ENCODE measurements at regions of chr2 and their contacts with region 1.

Region 1: DNA sequence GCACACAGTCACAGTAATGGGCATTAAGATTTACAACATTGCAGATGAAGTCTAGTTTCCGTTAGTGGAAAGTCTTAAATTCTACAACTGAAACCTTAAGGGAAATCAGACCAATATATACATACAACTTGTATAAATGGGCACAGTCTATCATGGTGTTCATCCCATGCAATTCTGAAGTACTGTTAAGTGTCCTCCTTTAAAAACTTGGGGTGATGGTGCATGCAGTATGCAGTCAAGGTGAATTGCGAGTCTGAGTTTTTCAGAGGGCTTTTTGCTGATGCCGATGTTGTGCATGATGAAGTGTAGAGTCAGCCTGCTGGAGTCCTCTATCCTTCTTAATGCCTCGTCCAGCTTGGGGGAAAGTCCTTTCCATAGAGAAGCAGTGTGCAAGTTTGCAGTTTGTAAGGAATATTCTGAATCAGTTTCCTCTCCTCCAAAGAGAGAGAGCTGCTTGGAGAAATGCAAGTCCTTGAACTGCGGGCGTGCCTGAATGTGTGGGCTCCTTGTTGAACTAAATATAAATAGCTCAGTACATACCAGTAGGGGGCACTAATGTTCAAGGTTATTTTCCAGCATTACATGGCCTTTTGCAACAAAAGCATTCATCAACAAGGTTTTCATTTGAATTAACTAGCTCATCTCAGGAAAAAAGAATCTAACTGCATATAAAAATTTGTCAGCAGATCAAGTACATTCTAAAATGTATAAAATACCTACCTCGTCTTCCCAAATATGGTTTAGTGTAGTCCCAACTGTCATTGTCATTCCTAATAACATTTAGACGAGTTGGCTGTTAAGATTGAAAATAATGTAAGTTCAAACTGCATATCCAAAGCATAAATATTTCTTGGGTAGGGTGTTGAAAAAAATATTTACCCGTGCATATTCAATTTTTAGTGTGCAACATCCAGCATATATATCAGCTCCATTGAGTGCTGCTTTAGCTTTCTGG is 21.3 kb downstream of the HNRNPLL start:
- DNase-seq: peak; percentile 52
- ATAC-seq: peak; percentile 84
- H3K4me3 ChIP-seq: no peak overlapping the region
- H3K27ac ChIP-seq: no peak overlapping the region
- H3K4me1 ChIP-seq: peaks cover 6% of the 10 kb centered on the region in 2 experiments; a peak in 3 of 4 replicates
- H3K27me3 ChIP-seq: no peaks in the 10 kb centered on the region
- CTCF ChIP-seq: peak; percentile 61 to 78 (median 65); a peak in 5 of 6 replicates
- POLR2A ChIP-seq: no peak
- RAD21 ChIP-seq: peak; percentile 78

Region 2: GRCh38 chr2:38315707-38316333 is 265.6 kb before region 1 on chr2:
- CTCF ChIA-PET with region 1: interaction called, 10 read pairs
- POLR2A ChIA-PET with region 1: no interaction called
- RAD21 ChIA-PET with region 1: no interaction called
- intact Hi-C with region 1: loop called (anchors 5 kb)
- DNase-seq: peak; percentile 31
- ATAC-seq: peak; percentile 85
- H3K4me3 ChIP-seq: no peak overlapping the region
- H3K27ac ChIP-seq: no peak overlapping the region
- H3K4me1 ChIP-seq: no peaks in the 10 kb centered on the region
- H3K27me3 ChIP-seq: no peaks in the 10 kb centered on the region
- CTCF ChIP-seq: peak; percentile 70 to 80 (median 77)
- POLR2A ChIP-seq: no peak
- RAD21 ChIP-seq: peak; percentile 88

Region 3: DNA sequence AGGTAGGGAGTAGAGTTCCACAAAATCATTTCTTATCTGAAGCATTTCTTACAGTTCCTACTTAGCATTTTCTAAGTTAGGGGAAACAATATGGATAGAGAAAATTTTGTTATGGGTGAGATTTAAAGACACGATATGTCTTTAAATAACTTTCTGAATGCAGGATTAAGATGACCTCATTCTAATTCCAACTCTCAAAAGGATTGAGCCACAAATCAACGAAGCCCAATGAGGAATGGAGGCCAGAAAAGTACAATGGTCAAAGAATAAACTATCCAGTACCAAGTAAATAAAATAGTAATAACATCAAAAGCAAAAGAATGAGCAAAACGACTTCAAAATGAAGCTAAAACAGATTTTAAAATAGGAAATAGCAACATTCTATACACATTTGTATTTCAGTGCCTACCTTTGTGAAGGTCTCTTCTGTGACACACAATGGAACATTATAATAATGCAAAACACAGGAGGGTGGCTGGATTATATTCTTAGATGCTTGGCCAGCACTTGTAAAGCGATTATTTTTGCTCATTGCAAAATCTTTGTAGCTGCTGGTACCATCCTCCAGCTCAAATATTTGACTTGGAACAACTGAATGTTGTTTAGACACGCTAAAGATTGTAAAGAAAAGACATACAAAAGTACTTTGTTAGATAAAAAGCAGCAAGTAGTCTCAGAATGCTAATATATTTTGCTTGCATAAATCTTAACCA is 12.6 kb before region 1 on chr2:
- CTCF ChIA-PET with region 1: interaction called, 20 read pairs
- POLR2A ChIA-PET with region 1: no interaction called
- RAD21 ChIA-PET with region 1: no interaction called
- intact Hi-C with region 1: no loop called
- DNase-seq: no peak
- ATAC-seq: no peak
- H3K4me3 ChIP-seq: no peak overlapping the region
- H3K27ac ChIP-seq: no peak overlapping the region
- H3K4me1 ChIP-seq: no peaks in the 10 kb centered on the region
- H3K27me3 ChIP-seq: no peaks in the 10 kb centered on the region
- CTCF ChIP-seq: no peak
- POLR2A ChIP-seq: no peak
- RAD21 ChIP-seq: no peak

Region 4: DNA sequence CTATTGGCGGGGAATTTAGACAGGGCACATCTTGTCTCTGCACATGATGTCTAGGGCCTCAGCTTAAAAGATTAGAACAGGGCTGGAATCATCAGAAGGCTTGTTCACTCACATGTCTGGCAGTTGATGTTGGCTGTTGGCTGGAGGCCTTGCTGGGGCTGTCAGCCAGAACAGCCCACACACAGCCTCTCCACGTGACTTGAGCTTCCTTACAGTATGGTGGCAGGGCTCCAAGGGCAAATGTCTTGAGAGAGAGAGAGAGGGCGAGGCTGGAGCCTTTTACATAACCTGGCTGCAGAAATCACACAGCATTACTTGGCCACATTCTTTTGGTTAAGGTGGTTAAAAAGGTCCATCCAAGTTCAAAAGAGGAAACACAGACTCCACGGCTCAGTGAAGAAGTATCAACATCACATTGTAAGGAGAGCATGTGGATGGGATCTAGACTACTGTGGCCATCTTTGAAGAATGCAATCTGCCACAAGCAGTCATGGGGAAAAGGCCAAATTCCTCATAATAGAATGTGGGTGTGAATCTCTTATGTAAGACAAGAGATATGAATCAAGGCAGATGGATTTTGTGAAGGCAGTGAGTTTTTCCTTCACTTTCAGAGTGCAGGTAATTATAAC is 139.3 kb after region 1 on chr2:
- CTCF ChIA-PET with region 1: interaction called, 12 read pairs
- POLR2A ChIA-PET with region 1: no interaction called
- RAD21 ChIA-PET with region 1: no interaction called
- intact Hi-C with region 1: loop called (anchors 2 kb)
- DNase-seq: no peak
- ATAC-seq: peak; percentile 26
- H3K4me3 ChIP-seq: no peak overlapping the region
- H3K27ac ChIP-seq: no peak overlapping the region
- H3K4me1 ChIP-seq: peaks cover 18 to 23% of the 10 kb centered on the region in 2 experiments; a peak in 3 of 4 replicates
- H3K27me3 ChIP-seq: no peaks in the 10 kb centered on the region
- CTCF ChIP-seq: no peak
- POLR2A ChIP-seq: no peak
- RAD21 ChIP-seq: no peak

Region 5: DNA sequence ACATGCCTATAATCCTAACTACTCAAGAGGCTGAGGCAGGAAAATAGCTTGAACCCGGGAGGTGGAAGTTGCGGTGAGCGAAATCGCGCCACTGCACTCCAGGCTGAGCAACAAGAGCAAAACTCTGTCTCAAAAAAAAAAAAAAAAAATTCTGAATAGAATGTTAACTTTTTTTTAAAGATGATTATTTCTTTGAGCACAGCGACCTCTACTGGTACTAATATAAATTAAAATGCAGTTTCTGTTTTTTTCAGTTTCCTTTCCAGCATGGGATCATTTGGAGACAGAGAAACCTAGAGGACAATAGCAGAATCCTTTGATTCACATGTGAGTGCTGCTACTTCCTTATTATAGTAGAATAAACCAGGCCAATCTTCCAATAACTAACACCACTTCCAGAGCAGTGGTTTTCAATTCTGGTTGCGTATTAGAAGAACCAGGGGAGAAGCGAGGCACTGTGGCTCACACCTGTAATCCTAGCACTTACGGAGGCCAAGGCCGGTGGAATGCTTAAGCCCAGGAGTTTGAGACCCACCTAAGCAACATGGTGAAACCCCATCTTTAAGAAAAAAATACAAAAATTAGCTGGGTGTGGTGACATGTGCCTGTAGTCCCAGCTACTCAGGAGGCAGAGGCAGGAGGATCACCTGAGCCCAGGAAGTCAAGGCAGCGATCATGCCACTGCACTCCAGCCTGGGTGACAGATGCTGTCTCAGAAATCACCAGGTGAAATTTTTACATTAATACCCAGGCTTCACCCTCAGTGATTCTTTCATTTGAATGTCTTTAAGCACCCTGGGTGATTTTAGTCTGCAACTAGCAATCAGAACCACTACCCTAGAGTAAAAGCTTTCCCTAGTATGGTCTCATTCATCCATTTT is 159.6 kb after region 1 on chr2:
- CTCF ChIA-PET with region 1: interaction called, 4 read pairs
- POLR2A ChIA-PET with region 1: no interaction called
- RAD21 ChIA-PET with region 1: interaction called in 1 of 2 experiments, 7 read pairs
- intact Hi-C with region 1: loop called (anchors 5 kb)
- DNase-seq: no peak
- ATAC-seq: peak; percentile 56
- H3K4me3 ChIP-seq: no peak overlapping the region
- H3K27ac ChIP-seq: 0 out of 2 replicates have a peak overlapping the region, but pooled peaks have one; percentile 0
- H3K4me1 ChIP-seq: no peaks in the 10 kb centered on the region
- H3K27me3 ChIP-seq: no peaks in the 10 kb centered on the region
- CTCF ChIP-seq: peak in 2 of 3 experiments; percentile 41 to 56; a peak in 3 of 6 replicates
- POLR2A ChIP-seq: no peak
- RAD21 ChIP-seq: peak; percentile 61

Region 6: GRCh38 chr2:38835015-38835601 is 253.6 kb after region 1 on chr2:
- CTCF ChIA-PET with region 1: no interaction called
- POLR2A ChIA-PET with region 1: no interaction called
- RAD21 ChIA-PET with region 1: no interaction called
- intact Hi-C with region 1: loop called (anchors 5 kb)
- DNase-seq: peak; percentile 19
- ATAC-seq: peak; percentile 64
- H3K4me3 ChIP-seq: no peak overlapping the region
- H3K27ac ChIP-seq: no peak overlapping the region
- H3K4me1 ChIP-seq: no peaks in the 10 kb centered on the region
- H3K27me3 ChIP-seq: no peaks in the 10 kb centered on the region
- CTCF ChIP-seq: peak; percentile 31 to 68 (median 52); a peak in 4 of 6 replicates
- POLR2A ChIP-seq: no peak
- RAD21 ChIP-seq: peak; percentile 52

Measured in HCT116 (cell line).